T-cell (primary cell): ENCODE measurements at regions of chr18 and their contacts with region 1.

Region 1: GRCh38 chr18:49416511-49416910 is 43.9 kb downstream of the DYM start:
- DNase-seq: no peak
- ATAC-seq: no peak
- H3K4me3 ChIP-seq: no peak overlapping the region
- H3K4me3 Mint-ChIP-seq: no peak overlapping the region
- H3K27ac ChIP-seq: no peak overlapping the region
- H3K27ac Mint-ChIP-seq: peak overlapping the region; percentile 56 to 67
- H3K4me1 ChIP-seq: peaks cover 4 to 18% of the 10 kb centered on the region in 2 experiments
- H3K4me1 Mint-ChIP-seq: peaks cover 50 to 62% (median 55%) of the 10 kb centered on the region in 3 donors
- H3K27me3 ChIP-seq: no peaks in the 10 kb centered on the region
- H3K27me3 Mint-ChIP-seq: no peaks in the 10 kb centered on the region

Region 2: DNA sequence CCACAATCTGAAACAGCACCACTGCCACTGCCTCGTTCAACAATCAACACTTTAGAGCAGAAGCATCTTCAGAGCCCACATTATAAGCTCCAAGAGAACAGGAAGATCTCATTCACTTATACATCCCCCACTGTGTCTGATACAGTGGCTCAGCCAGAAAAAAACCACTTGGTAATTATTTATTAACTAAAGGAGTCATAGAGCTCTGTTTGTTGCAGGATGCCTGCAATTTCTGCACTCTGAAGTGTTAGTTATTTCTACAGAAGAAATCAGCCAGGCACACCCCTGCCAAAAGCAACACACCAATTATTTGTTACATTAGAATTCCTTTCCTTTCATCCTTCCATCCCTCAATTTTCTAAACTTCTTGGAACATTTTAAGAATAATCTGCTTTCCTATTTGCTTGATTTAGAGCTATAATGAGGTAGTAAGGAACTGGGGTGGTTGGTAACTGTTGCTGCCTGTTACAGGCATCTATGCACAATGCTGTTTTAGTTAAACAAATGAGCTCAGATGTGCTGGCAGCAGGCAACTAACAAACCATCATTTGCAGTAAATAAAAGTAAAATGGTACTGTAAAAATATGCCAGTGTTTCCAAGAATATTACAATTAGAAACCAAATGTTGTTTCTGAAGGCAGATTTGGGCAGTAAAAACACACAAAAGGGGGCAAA is 16.0 kb before region 1 on chr18:
- CTCF ChIA-PET with region 1: interaction called in 1 of 2 experiments, 3 read pairs
- POLR2A ChIA-PET with region 1: interaction called, 3 to 12 read pairs
- DNase-seq: no peak
- ATAC-seq: no peak
- H3K4me3 ChIP-seq: no peak overlapping the region
- H3K4me3 Mint-ChIP-seq: peak overlapping the region in 1 of 3 donors; percentile 9
- H3K27ac ChIP-seq: no peak overlapping the region
- H3K27ac Mint-ChIP-seq: peak overlapping the region; percentile 13 to 40
- H3K4me1 ChIP-seq: peaks cover 12 to 19% of the 10 kb centered on the region in 2 experiments
- H3K4me1 Mint-ChIP-seq: peaks cover 53 to 57% (median 53%) of the 10 kb centered on the region in 3 donors
- H3K27me3 ChIP-seq: no peaks in the 10 kb centered on the region
- H3K27me3 Mint-ChIP-seq: no peaks in the 10 kb centered on the region